Psoas muscle (tissue), 8 donors: ENCODE measurements at regions of chr10 and their contacts with region 1.

Region 1: DNA sequence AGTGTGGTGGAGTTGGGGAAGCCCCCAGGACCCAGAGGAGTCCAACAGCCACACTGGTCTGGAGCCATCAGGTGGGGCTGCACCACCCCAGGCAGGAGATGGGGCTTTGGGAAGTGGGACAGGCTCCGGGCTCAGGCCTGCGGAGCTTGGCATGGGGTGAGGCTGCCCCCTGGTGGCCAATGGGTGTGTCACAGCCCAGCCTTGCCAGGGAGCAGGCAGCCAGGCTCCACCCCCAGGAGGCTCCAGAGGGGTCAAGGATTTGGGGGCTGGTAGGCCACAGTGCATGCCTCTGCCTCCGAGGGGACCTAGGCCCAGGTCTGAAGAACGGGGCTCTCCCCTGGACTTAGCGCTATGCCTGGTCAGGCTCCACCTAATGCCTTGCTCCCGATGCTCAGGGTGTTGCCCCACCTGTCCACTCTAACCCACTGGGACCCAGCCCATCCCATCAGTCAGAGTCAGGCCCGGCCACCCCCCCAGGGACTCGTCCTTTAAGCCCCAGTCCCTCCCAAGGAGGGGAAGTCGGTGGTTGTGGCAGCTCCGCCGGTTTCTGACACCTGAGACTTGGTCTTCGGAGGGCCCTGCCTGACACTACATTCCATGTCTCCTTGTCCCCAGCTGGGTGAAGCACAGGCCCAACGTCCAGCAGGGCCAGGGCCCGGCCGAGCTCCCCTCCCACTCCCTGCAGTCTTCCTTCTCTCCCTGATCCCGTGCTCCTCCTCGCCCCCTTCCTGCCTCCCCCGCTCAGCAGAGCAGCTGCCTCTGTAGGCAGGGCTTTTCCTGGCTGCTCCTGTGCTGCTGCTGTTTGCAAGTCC is 11.3 kb upstream of the SAMD8 start:
- DNase-seq: peak; percentile 80 to 91
- ATAC-seq: peak; percentile 79 to 84 (median 80)
- H3K4me3 ChIP-seq: peak overlapping the region; percentile 16
- H3K27ac ChIP-seq: peak overlapping the region; percentile 99
- H3K4me1 ChIP-seq: peaks cover 55% of the 10 kb centered on the region
- H3K27me3 ChIP-seq: no peaks in the 10 kb centered on the region
- CTCF ChIP-seq: peak; percentile 99

Region 2: DNA sequence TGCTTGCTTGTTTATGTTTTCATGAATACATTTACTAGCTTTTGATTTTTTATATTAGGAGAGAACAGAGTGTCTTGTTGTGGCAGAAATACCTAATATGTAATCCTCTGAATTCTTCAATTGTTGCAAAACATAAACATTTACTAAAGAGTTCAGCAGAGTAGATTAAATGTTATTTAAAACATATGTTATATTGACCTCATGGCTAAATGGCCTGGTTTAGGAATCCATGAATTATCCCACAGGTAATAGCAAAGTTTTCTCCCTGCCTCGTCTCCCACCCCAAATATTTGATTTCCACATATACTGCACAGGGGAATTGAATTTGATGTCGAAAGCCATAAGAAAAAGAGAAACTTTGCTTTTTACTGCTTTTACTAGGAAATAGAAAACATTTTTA is 837.3 kb before region 1 on chr10:
- intact Hi-C with region 1: loop called (anchors 2 kb)
- DNase-seq: no peak
- ATAC-seq: no peak
- H3K4me3 ChIP-seq: no peak overlapping the region
- H3K27ac ChIP-seq: no peak overlapping the region
- H3K4me1 ChIP-seq: no peaks in the 10 kb centered on the region
- H3K27me3 ChIP-seq: no peaks in the 10 kb centered on the region
- CTCF ChIP-seq: no peak

Region 3: GRCh38 chr10:74888962-74889663 is 211.0 kb before region 1 on chr10:
- intact Hi-C with region 1: no loop called
- DNase-seq: no peak
- ATAC-seq: peak; percentile 47 to 79 (median 74)
- H3K4me3 ChIP-seq: no peak overlapping the region
- H3K27ac ChIP-seq: peak overlapping the region; percentile 56
- H3K4me1 ChIP-seq: peaks cover 43% of the 10 kb centered on the region
- H3K27me3 ChIP-seq: no peaks in the 10 kb centered on the region
- CTCF ChIP-seq: peak; percentile 10

Region 4: DNA sequence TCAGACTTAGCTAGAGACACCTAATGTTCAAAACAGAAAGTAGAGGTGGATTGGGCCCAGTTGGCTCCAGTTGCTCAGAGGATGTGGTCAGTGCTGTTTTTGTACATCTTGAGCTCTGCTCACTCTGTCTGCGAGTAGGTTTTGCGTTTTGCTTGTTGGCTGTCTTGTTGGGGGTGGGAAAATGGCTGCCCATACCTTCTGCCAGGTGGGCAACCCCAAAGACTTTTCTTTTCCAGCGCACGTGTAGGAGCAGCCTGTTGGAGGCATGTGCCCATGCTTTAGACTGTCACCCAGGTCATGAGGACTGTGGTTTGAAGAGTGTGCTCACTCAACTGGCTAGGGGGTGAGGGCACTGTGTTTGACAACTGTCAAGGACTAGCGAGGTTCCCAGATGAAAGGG is 199.9 kb before region 1 on chr10:
- intact Hi-C with region 1: loop called in 1 of 2 experiments (anchors 10 kb)
- DNase-seq: no peak
- ATAC-seq: peak; percentile 40 to 51 (median 46)
- H3K4me3 ChIP-seq: no peak overlapping the region
- H3K27ac ChIP-seq: peak overlapping the region; percentile 63
- H3K4me1 ChIP-seq: peaks cover 55% of the 10 kb centered on the region
- H3K27me3 ChIP-seq: no peaks in the 10 kb centered on the region
- CTCF ChIP-seq: no peak

Region 5: GRCh38 chr10:74924251-74924951 is 175.8 kb before region 1 on chr10:
- intact Hi-C with region 1: loop called in 1 of 2 experiments (anchors 10 kb)
- DNase-seq: no peak
- ATAC-seq: peak; percentile 70 to 84 (median 81)
- H3K4me3 ChIP-seq: no peak overlapping the region
- H3K27ac ChIP-seq: peak overlapping the region; percentile 68
- H3K4me1 ChIP-seq: peaks cover 81% of the 10 kb centered on the region
- H3K27me3 ChIP-seq: no peaks in the 10 kb centered on the region
- CTCF ChIP-seq: no peak

Region 6: GRCh38 chr10:75042292-75042974 is 57.7 kb before region 1 on chr10:
- intact Hi-C with region 1: loop called (anchors 2 to 5 kb)
- DNase-seq: peak; percentile 53 to 83
- ATAC-seq: peak; percentile 92 to 95 (median 94)
- H3K4me3 ChIP-seq: no peak overlapping the region
- H3K27ac ChIP-seq: peak overlapping the region; percentile 87
- H3K4me1 ChIP-seq: peaks cover 50% of the 10 kb centered on the region
- H3K27me3 ChIP-seq: no peaks in the 10 kb centered on the region
- CTCF ChIP-seq: no peak

Region 7: DNA sequence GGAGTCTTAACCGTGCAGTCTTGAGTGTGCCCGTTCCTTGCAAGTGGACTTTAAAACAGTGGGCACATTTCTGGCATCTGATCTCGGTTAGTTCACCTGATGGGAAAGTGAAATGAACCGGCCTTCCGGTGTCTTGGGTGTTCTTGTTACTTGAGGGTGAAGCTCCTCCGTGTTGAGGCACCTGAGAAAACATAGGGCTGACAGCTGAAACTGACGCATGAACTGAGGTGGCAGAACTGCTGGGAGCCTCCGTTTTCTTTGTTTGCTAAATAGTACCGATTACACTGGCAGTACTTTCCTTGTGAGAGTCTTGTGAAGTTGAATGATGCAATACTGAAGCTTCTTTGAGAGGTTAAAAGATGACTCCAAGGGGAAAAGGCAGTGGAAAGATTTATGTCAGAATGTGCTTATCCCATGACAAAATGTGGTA is 51.5 kb before region 1 on chr10:
- intact Hi-C with region 1: loop called in 1 of 2 experiments (anchors 5 kb)
- DNase-seq: no peak
- ATAC-seq: peak in 1 of 4 donors; percentile 23
- H3K4me3 ChIP-seq: no peak overlapping the region
- H3K27ac ChIP-seq: no peak overlapping the region
- H3K4me1 ChIP-seq: peaks cover 4% of the 10 kb centered on the region
- H3K27me3 ChIP-seq: no peaks in the 10 kb centered on the region
- CTCF ChIP-seq: no peak